Activated B cell treated with CpG ODN at 0.5 μM for 24 hours (primary cell): ENCODE measurements at regions of chr20 and their contacts with region 1.

Region 1: GRCh38 chr20:53594068-53595017 is 704 bp upstream of the ZNF217 start:
- DNase-seq: peak; percentile 99
- ATAC-seq: peak; percentile 74
- H3K4me3 Mint-ChIP-seq: peak overlapping the region; percentile 93
- H3K27ac Mint-ChIP-seq: peak overlapping the region; percentile 89
- H3K4me1 Mint-ChIP-seq: peaks cover 57% of the 10 kb centered on the region
- H3K27me3 Mint-ChIP-seq: no peaks in the 10 kb centered on the region
- CTCF ChIP-seq: no peak

Region 2: DNA sequence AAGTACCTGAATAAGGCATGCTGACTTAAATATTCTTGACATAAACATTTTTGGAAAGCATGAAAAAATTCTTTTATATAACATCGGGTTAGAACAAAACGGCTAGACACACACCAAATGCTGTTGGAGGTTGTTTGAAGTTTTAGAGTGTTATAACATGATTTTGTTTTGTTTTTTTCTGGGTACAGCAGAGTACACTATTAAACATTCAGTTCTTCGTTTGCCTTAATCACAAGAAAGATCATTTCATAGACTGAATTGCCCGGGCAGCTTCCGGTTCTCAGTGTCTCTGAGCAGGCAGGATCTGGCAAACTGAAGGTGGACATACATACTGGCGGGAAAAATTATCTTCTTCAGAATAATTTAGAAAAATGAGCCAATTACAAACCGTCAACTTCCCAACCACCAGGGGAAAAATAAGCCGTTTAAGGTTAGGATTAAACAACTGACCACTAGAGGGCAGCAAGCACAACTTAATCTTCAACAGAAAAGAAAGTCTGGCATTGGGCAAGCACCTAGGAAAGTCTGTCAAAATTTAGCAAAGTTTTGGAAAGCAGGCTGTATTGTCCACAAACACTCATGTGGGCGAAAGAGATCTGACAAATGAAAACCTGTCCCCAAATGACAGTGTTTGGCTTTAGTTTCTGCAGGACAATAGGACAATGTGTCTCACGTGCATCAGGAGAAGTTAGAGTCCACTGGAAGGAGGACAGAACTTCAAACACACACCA is 15.7 kb before region 1 on chr20:
- CTCF ChIA-PET with region 1: interaction called, 4 read pairs
- POLR2A ChIA-PET with region 1: interaction called, 39 read pairs
- intact Hi-C with region 1: loop called (anchors 1 kb)
- DNase-seq: no peak
- ATAC-seq: peak; percentile 58
- H3K4me3 Mint-ChIP-seq: peak overlapping the region; percentile 32
- H3K27ac Mint-ChIP-seq: peak overlapping the region; percentile 88
- H3K4me1 Mint-ChIP-seq: peaks cover 56% of the 10 kb centered on the region
- H3K27me3 Mint-ChIP-seq: no peaks in the 10 kb centered on the region
- CTCF ChIP-seq: no peak

Region 3: GRCh38 chr20:53643031-53643832 is 48.9 kb after region 1 on chr20:
- CTCF ChIA-PET with region 1: no interaction called
- POLR2A ChIA-PET with region 1: interaction called, 7 read pairs
- intact Hi-C with region 1: loop called (anchors 5 kb)
- DNase-seq: no peak
- ATAC-seq: peak; percentile 94
- H3K4me3 Mint-ChIP-seq: peak overlapping the region; percentile 78
- H3K27ac Mint-ChIP-seq: peak overlapping the region; percentile 94
- H3K4me1 Mint-ChIP-seq: peaks cover 36% of the 10 kb centered on the region
- H3K27me3 Mint-ChIP-seq: no peaks in the 10 kb centered on the region
- CTCF ChIP-seq: no peak

Region 4: DNA sequence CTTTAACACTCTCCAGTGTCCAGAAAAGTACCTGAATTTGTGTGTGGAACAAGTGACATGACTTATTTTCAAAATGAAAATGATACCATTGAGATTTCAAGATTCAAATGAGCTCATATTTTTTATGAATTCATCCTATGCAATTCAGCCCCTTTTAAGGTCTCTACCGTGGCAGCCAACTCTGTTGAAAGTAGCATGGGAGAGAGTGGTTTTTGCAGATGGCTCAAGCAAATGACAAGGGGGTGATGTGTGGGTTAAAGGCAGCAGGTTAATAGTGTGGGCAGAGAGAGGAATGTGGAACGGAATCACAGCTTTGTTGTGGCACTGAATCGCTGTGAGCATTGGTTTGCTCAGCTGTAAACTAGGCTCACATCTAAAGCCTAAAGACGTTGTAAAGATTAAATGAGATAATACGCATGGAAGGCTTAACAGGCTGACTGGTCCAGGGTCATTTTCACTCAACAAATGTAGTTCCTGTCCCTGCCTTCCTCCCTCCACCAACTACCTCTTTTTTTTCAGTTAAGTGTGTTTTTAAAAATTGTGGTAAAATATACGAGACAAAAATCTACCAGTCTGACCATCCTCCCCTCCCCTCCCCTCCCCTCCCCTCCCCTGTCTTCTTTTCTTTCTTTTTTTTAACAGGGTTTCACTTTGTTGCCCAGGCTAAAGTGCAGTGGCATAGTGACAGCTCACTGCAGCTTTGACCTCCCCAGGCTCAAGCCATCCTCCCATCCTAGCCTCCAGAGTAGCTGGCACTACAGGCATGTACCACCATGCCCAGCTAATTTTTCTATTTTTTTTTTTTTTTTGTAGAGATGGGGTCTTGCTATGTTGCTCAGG is 114.0 kb after region 1 on chr20:
- CTCF ChIA-PET with region 1: no interaction called
- POLR2A ChIA-PET with region 1: interaction called, 4 read pairs
- intact Hi-C with region 1: loop called (anchors 1 kb)
- DNase-seq: no peak
- ATAC-seq: peak; percentile 60
- H3K4me3 Mint-ChIP-seq: peak overlapping the region; percentile 62
- H3K27ac Mint-ChIP-seq: peak overlapping the region; percentile 96
- H3K4me1 Mint-ChIP-seq: peaks cover 44% of the 10 kb centered on the region
- H3K27me3 Mint-ChIP-seq: no peaks in the 10 kb centered on the region
- CTCF ChIP-seq: no peak

Region 5: GRCh38 chr20:53828682-53829254 is 234.4 kb after region 1 on chr20:
- CTCF ChIA-PET with region 1: no interaction called
- POLR2A ChIA-PET with region 1: interaction called, 9 read pairs
- intact Hi-C with region 1: loop called (anchors 2 kb)
- DNase-seq: no peak
- ATAC-seq: no peak
- H3K4me3 Mint-ChIP-seq: peak overlapping the region; percentile 81
- H3K27ac Mint-ChIP-seq: peak overlapping the region; percentile 96
- H3K4me1 Mint-ChIP-seq: peaks cover 66% of the 10 kb centered on the region
- H3K27me3 Mint-ChIP-seq: no peaks in the 10 kb centered on the region
- CTCF ChIP-seq: no peak

Region 6: DNA sequence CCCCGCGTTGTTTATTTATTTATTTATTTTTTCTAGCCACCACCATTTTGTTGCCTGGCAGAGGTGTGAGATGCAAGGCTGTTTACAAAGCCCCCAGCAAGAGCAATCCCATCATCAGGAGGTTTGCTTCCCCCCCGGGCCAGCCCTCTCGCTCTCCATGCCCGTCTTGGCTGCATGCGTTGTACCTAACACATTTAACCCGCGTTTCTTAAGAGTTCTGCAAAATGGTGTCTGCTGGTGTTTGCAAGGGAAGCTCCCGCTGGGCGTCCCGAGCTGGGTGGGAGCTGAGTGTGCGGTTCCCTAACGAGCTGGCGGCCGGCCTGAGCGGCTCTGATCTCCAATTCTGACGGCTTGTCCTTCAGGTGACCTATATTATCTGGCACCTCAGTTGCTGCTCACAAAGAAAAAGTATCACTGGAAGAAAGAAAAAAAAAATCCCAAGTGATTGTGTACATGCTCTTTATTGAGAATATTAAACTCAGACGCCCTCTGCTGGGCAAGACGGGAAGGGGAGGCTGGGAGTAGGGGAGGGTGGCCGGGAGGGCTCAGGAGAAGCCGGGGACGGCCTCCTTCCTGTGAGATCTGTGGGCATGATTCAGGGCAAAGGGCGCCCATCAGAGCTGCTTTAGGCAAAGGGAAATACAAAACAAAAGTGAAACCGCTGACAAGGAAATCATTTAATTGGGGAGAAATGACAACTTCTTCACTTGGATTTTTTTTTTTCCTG is 321.3 kb after region 1 on chr20:
- CTCF ChIA-PET with region 1: interaction called, 7 read pairs
- POLR2A ChIA-PET with region 1: interaction called, 25 read pairs
- intact Hi-C with region 1: loop called (anchors 1 kb)
- DNase-seq: peak; percentile 76
- ATAC-seq: peak; percentile 88
- H3K4me3 Mint-ChIP-seq: peak overlapping the region; percentile 94
- H3K27ac Mint-ChIP-seq: peak overlapping the region; percentile 93
- H3K4me1 Mint-ChIP-seq: peaks cover 57% of the 10 kb centered on the region
- H3K27me3 Mint-ChIP-seq: no peaks in the 10 kb centered on the region
- CTCF ChIP-seq: no peak

Region 7: GRCh38 chr20:53939572-53940359 is 345.4 kb after region 1 on chr20:
- CTCF ChIA-PET with region 1: interaction called, 3 read pairs
- POLR2A ChIA-PET with region 1: interaction called, 30 read pairs
- intact Hi-C with region 1: no loop called
- DNase-seq: peak; percentile 50
- ATAC-seq: peak; percentile 68
- H3K4me3 Mint-ChIP-seq: peak overlapping the region; percentile 62
- H3K27ac Mint-ChIP-seq: peak overlapping the region; percentile 82
- H3K4me1 Mint-ChIP-seq: peaks cover 88% of the 10 kb centered on the region
- H3K27me3 Mint-ChIP-seq: no peaks in the 10 kb centered on the region
- CTCF ChIP-seq: no peak

Region 8: GRCh38 chr20:55009066-55009465 is 1414.7 kb after region 1 on chr20:
- CTCF ChIA-PET with region 1: no interaction called
- POLR2A ChIA-PET with region 1: no interaction called
- intact Hi-C with region 1: no loop called
- DNase-seq: no peak
- ATAC-seq: no peak
- H3K4me3 Mint-ChIP-seq: no peak overlapping the region
- H3K27ac Mint-ChIP-seq: no peak overlapping the region
- H3K4me1 Mint-ChIP-seq: no peaks in the 10 kb centered on the region
- H3K27me3 Mint-ChIP-seq: no peaks in the 10 kb centered on the region
- CTCF ChIP-seq: no peak